ENCODE measurements at regions of chr22 and their contacts with region 1.

Region 1: DNA sequence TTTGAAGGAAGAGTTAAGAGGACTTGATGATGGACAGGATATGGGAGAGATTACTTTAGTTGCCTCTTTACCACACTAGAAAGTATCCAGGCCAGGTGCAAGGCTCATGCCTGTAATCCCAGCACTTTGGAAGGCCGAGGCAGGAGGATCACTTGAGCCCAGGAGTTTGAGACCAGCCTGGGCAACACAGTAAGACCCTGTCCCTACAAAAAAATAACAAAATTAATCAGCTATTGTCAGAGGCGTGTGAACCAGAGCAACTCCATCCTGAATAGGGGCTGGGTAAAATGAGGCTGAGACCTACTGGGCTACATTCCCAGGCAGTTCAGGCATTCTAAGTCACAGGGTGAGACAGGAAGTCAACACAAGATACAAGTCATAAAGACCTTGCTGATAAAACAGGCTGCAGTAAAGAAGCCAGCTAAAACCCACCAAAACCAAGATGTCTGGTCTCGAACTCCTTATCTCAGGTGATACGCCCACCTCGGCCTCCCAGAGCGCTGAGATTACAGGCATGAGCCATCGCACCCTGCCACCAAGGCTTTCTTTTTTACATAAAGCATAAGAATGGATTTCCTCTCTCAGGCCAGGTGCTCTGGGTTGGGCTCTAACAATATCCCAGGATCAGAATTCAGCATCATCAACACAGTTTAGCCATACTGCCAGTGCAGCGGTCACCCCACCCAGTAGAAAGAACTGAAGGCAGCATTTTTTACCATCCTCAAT is 17.8 kb downstream of the PI4KA start:
- DNase-seq: peak in 1 of 2 experiments; percentile 49
- H3K4me3 ChIP-seq: no peak overlapping the region
- H3K4me3 Mint-ChIP-seq: no peak overlapping the region
- H3K27ac Mint-ChIP-seq: no peak overlapping the region
- H3K4me1 ChIP-seq: peaks cover 44% of the 10 kb centered on the region
- H3K4me1 Mint-ChIP-seq: peaks cover 28% of the 10 kb centered on the region
- H3K27me3 ChIP-seq: no peaks in the 10 kb centered on the region
- H3K27me3 Mint-ChIP-seq: no peaks in the 10 kb centered on the region
- CTCF ChIP-seq: no peak

Region 2: DNA sequence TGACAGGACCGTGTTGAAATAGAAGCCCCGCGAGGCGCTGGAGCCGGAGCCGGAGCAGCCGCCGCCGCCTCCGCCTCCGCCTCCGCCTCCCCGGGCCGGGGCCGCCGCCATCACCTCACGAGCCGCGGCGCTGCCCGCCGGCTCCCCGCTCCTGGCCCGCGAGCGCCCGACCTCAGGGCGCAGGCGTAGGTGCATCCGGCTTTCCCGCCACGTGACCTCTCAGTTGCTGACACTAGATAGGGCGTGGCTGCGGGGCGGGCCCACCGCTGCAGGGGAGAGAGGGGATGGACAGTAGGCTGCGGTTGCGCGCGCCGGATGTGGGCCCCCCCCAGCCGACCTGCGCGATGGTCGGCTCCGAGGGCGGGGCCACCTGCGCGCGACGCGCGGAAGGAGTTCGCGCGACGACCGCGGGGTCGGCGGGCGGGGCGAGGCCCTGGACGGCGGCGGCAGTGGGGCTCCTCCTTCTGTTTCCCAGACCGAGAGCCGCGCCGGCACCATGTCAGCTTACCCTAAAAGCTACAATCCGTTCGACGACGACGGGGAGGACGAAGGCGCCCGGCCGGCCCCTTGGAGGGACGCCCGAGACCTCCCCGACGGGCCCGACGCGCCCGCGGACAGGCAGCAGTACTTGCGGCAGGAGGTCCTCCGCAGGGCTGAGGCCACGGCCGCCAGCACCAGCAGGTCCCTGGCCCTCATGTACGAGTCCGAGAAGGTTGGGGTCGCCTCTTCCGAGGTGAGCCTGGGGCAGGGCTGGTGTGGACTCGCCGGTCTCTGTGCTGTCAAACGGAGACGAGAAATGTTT is 18.0 kb after region 1 on chr22 and contains the starts of genes PI4KA and SNAP29:
- CTCF ChIA-PET with region 1: interaction called, 3 read pairs
- POLR2A ChIA-PET with region 1: no interaction called
- intact Hi-C with region 1: loop called (anchors 2 kb)
- DNase-seq: peak; percentile 99
- H3K4me3 ChIP-seq: peak within 1 kb of the TSS; percentile 88
- H3K4me3 Mint-ChIP-seq: peak within 1 kb of the TSS; percentile 82
- H3K27ac Mint-ChIP-seq: peak within 1 kb of the TSS; percentile 73
- H3K4me1 ChIP-seq: peaks cover 15% of the 10 kb centered on the region
- H3K4me1 Mint-ChIP-seq: peaks cover 21% of the 10 kb centered on the region
- H3K27me3 ChIP-seq: no peaks in the 10 kb centered on the region
- H3K27me3 Mint-ChIP-seq: no peaks in the 10 kb centered on the region
- CTCF ChIP-seq: no peak
- total RNA-seq, gene PI4KA: 66.9 and 67.2 TPM in 2 replicates
- total RNA-seq, gene SNAP29: 26.2 and 26.8 TPM in 2 replicates

Measured in Caco-2 (cell line).